ENCODE measurements at regions of chr4 and their contacts with region 1.

Region 1: DNA sequence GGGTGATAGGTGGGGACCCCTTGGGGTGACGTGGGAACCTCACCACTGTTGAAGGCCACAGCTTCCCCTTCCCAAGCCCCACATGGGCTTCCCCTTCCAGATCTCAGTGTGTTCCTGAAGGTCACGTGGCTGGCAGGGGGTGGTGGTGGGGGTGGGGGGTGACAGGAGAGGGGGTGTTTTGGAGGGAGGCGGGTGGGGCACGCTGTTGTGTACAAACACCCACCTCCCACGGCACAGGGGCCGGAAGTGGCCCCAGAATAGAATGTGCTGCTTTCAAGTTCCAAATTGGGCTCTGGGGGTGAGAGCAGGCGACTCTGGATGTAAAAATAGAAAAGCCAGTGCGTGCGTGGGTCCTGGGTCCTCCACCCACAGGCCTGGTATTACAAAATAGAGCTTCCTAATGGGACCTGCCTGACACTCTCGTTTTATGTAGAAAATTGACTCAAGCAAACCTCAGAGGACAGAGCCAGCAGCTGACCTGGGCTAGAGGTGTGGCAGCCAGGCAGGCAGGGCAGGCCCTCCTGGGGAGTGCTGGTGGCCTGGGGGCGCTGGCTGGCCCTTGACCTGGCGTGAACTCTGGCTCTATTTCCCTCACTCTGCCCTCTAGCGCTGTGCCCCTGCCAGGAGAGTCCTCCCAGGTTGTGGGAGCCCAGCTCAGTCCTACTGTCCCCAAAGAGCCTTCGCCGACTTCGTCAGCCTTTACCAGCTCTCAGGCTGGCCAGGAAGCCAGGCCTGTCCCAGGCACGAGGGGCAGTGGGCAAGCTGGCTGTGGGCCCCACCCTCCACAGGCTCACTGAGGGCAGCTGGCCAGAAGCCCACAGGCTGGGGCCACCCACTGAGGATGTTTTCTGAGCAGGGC is 5.4 kb upstream of the SH3BP2 start:
- DNase-seq: peak; percentile 88
- ATAC-seq: peak; percentile 79
- H3K4me3 ChIP-seq: no peak overlapping the region
- H3K27ac ChIP-seq: peak overlapping the region; percentile 79
- H3K4me1 ChIP-seq: peaks cover 43% of the 10 kb centered on the region
- H3K27me3 ChIP-seq: no peaks in the 10 kb centered on the region
- CTCF ChIP-seq: peak in 2 of 3 experiments; percentile 16 to 26; a peak in 2 of 6 replicates
- EP300 ChIP-seq: peak; percentile 88 to 89; a peak in 2 of 4 replicates
- POLR2A ChIP-seq: peak; percentile 43; the same call in 1 of the 2 replicates
- RAD21 ChIP-seq: no peak

Region 2: GRCh38 chr4:2745981-2746806 is 41.3 kb before region 1 on chr4:
- CTCF ChIA-PET with region 1: interaction called, 5 read pairs
- POLR2A ChIA-PET with region 1: interaction called, 18 read pairs
- RAD21 ChIA-PET with region 1: interaction called, 29 read pairs
- SMC1A ChIA-PET with region 1: interaction called, 3 read pairs
- in situ Hi-C with region 1: no loop called
- intact Hi-C with region 1: loop called (anchors 1 kb)
- DNase-seq: peak; percentile 98
- ATAC-seq: peak; percentile 93
- H3K4me3 ChIP-seq: peak overlapping the region; percentile 22
- H3K27ac ChIP-seq: peak overlapping the region; percentile 98
- H3K4me1 ChIP-seq: peaks cover 47% of the 10 kb centered on the region
- H3K27me3 ChIP-seq: no peaks in the 10 kb centered on the region
- CTCF ChIP-seq: no peak
- EP300 ChIP-seq: peak; percentile 89 to 98
- POLR2A ChIP-seq: peak; percentile 58; the same call in 1 of the 2 replicates
- RAD21 ChIP-seq: no peak

Region 3: GRCh38 chr4:2771264-2771663 is 16.2 kb before region 1 on chr4:
- CTCF ChIA-PET with region 1: interaction called, 4 read pairs
- POLR2A ChIA-PET with region 1: interaction called, 8 read pairs
- RAD21 ChIA-PET with region 1: interaction called, 16 read pairs
- SMC1A ChIA-PET with region 1: interaction called, 13 read pairs
- in situ Hi-C with region 1: no loop called
- intact Hi-C with region 1: loop called (anchors 2 kb)
- DNase-seq: no peak
- ATAC-seq: peak; percentile 59
- H3K4me3 ChIP-seq: 0 out of 2 replicates have a peak overlapping the region, but pooled peaks have one; percentile 9
- H3K27ac ChIP-seq: no peak overlapping the region
- H3K4me1 ChIP-seq: peaks cover 22% of the 10 kb centered on the region
- H3K27me3 ChIP-seq: no peaks in the 10 kb centered on the region
- CTCF ChIP-seq: no peak
- EP300 ChIP-seq: no peak
- POLR2A ChIP-seq: no peak
- RAD21 ChIP-seq: no peak

Region 4: GRCh38 chr4:2800691-2801596 is 13.5 kb after region 1 on chr4:
- CTCF ChIA-PET with region 1: interaction called, 8 read pairs
- POLR2A ChIA-PET with region 1: interaction called, 57 read pairs
- RAD21 ChIA-PET with region 1: interaction called, 43 read pairs
- SMC1A ChIA-PET with region 1: interaction called, 49 read pairs
- in situ Hi-C with region 1: no loop called
- intact Hi-C with region 1: no loop called
- DNase-seq: peak; percentile 41
- ATAC-seq: peak; percentile 78
- H3K4me3 ChIP-seq: peak overlapping the region; percentile 77
- H3K27ac ChIP-seq: peak overlapping the region; percentile 82
- H3K4me1 ChIP-seq: peaks cover 62% of the 10 kb centered on the region
- H3K27me3 ChIP-seq: no peaks in the 10 kb centered on the region
- CTCF ChIP-seq: no peak
- EP300 ChIP-seq: 0 out of 4 replicates have a peak, but pooled peaks of 1 of the 2 experiments have one; percentile 43
- POLR2A ChIP-seq: no peak
- RAD21 ChIP-seq: no peak

Region 5: GRCh38 chr4:2811830-2812611 is 24.6 kb after region 1 on chr4:
- CTCF ChIA-PET with region 1: interaction called, 4 read pairs
- POLR2A ChIA-PET with region 1: interaction called, 9 read pairs
- RAD21 ChIA-PET with region 1: interaction called, 10 read pairs
- SMC1A ChIA-PET with region 1: interaction called, 15 read pairs
- in situ Hi-C with region 1: no loop called
- intact Hi-C with region 1: no loop called
- DNase-seq: peak; percentile 40
- ATAC-seq: peak; percentile 82
- H3K4me3 ChIP-seq: peak overlapping the region; percentile 97
- H3K27ac ChIP-seq: peak overlapping the region; percentile 90
- H3K4me1 ChIP-seq: peaks cover 41% of the 10 kb centered on the region
- H3K27me3 ChIP-seq: no peaks in the 10 kb centered on the region
- CTCF ChIP-seq: no peak
- EP300 ChIP-seq: 0 out of 4 replicates have a peak, but pooled peaks of 1 of the 2 experiments have one; percentile 17
- POLR2A ChIP-seq: peak; percentile 88
- RAD21 ChIP-seq: no peak

Region 6: DNA sequence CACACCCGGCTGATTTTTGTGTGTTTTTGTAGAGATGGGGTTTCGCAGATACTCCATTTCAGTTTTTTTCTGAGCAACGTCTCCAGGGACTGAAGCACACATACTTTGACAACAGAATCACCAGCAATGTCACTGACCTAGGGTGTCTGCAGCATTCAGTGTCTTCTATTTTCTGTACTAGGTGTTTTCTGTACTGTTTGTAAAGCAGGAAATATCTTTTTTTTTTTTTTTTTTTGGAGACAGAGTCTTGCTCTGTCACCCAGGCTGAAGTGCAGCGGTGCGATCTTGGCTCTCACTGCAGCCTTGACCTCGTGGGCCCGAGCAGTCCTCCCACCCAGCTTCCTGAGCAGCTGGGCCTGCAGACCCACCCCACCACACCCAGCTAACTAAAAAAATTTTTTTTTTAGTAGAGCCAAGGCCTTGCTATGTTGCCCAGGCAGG is 65.0 kb after region 1 on chr4:
- CTCF ChIA-PET with region 1: interaction called, 4 read pairs
- POLR2A ChIA-PET with region 1: interaction called, 8 read pairs
- RAD21 ChIA-PET with region 1: interaction called, 14 read pairs
- SMC1A ChIA-PET with region 1: interaction called, 4 read pairs
- in situ Hi-C with region 1: no loop called
- intact Hi-C with region 1: no loop called
- DNase-seq: peak; percentile 59
- ATAC-seq: peak; percentile 67
- H3K4me3 ChIP-seq: peak overlapping the region; percentile 65
- H3K27ac ChIP-seq: peak overlapping the region; percentile 60
- H3K4me1 ChIP-seq: peaks cover 50% of the 10 kb centered on the region
- H3K27me3 ChIP-seq: no peaks in the 10 kb centered on the region
- CTCF ChIP-seq: no peak
- EP300 ChIP-seq: no peak
- POLR2A ChIP-seq: no peak
- RAD21 ChIP-seq: no peak

Measured in GM12878 (cell line).